SK-N-SH (cell line): ENCODE measurements at regions of chr15 and their contacts with region 1.

Region 1: DNA sequence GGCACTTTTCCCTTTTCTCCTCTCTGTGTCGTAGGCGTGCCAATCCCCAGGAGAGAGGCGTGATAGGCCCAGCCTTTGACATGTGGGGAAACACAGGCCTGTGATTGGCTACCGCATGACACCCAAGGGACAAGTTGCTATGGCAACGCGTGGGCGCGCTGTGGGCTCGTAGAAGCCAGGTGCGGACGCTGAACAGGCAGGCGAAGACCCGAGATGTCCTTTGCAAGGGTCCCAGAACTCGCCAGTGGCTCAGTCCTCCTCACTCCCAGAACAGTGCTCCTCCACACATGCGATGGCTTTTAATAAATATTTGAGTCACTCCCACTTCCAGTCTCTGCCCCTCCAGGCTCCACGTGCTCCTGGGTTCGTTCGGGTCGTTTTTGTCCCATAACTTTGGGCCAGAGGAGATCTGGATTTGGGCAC is 4.2 kb downstream of the SLC51B start:
- DNase-seq: peak; percentile 96
- H3K4me3 ChIP-seq: peak overlapping the region; percentile 48 to 71
- H3K27ac ChIP-seq: no peak overlapping the region
- H3K4me1 ChIP-seq: peaks cover 0 to 14% of the 10 kb centered on the region in 2 experiments; a peak in 1 of 4 replicates
- H3K27me3 ChIP-seq: no peaks in the 10 kb centered on the region
- CTCF ChIP-seq: no peak
- EP300 ChIP-seq: no peak
- RAD21 ChIP-seq: no peak

Region 2: DNA sequence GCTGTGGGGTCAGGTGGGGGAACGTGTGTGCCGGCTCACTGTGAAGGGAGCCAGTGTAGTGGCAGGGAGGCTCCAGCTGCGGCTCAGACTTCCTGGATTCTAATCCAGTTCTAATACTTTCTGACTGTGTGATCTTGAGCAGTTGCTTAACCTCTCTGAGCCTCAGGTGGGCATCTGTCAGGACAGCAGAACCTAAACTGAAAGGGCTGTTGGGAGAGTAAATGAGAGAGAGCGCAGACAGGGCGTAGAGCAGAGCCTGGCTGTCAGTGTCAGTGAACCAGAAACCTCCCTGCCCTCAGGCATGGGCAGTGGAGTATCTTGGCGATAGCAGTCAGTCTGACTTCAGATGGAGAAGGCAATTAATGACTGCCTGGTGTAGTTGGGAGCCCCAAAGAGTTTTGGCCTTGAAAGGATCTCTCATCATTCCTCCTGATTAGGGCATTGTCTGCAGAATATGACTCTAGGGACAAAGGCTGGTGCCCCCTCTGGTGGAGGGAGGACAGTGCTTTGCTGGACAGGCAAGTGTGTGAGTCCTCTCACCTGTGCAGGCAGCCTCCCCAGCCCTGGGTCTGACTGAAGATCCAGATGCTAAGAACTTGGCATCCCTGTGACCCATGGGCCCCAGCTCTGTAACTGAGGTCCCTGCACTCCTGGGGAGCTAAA is 36.7 kb after region 1 on chr15:
- CTCF ChIA-PET with region 1: interaction called, 99 read pairs
- POLR2A ChIA-PET with region 1: no interaction called
- DNase-seq: peak; percentile 69
- H3K4me3 ChIP-seq: no peak overlapping the region
- H3K27ac ChIP-seq: no peak overlapping the region
- H3K4me1 ChIP-seq: peaks cover 0 to 35% of the 10 kb centered on the region in 2 experiments; a peak in 1 of 4 replicates
- H3K27me3 ChIP-seq: no peaks in the 10 kb centered on the region
- CTCF ChIP-seq: peak; percentile 57
- EP300 ChIP-seq: no peak
- RAD21 ChIP-seq: peak; percentile 56